Activated T-helper 2 cell treated with anti-CD3 and anti-CD28 coated beads, Interferon-gamma antibody, Interleukin-2, Interleukin-4, amounts not matched to agents 10 μg/mL and 5 μg/mL and 100 μg/mL, durations not matched to agents 14 hours and 24 hours and 36 hours (primary cell): ENCODE measurements at regions of chr14 and their contacts with region 1.

Region 1: DNA sequence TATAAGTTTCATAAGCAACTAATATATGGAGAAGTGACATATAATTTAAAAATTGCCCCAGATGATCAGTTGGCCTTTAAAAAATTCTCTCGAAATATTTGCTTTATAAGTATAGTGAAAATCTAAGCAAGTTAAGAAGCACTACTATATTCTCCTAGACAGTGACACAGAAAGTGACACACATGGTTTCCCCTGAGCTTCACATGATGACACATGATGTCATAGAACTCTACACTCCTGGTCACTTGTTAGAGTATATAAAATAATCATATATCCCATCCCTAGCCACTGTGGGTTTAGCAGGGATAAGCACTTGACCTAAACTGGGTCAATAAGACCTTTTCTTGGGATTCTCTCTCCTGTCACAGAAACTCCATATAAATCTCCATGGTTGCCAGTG is 42.6 kb upstream of the MTHFD1 start:
- DNase-seq: no peak
- H3K4me3 Mint-ChIP-seq: no peak overlapping the region
- H3K27ac Mint-ChIP-seq: no peak overlapping the region
- H3K4me1 Mint-ChIP-seq: peaks cover 8% of the 10 kb centered on the region
- H3K27me3 Mint-ChIP-seq: no peaks in the 10 kb centered on the region

Region 2: DNA sequence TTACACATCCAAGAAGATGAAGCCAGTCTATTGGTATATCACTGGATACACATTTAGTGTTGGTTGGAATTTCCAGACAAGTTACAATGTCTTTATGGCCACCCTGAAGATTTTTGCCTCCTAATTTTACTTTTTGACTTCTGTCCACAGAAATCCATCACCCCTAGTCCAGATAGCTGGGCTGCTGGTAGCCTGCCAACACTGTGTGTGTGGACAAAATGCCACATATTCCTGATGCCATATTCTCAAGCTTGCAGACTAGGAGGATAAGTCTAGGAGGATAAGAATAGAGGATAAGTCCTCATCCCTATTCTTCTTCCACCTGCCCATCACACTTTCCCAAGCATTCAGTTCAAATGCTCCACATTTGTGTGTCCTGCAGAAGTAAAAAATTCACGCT is 55.9 kb before region 1 on chr14:
- intact Hi-C with region 1: no loop called
- DNase-seq: no peak
- H3K4me3 Mint-ChIP-seq: no peak overlapping the region
- H3K27ac Mint-ChIP-seq: no peak overlapping the region
- H3K4me1 Mint-ChIP-seq: peaks cover 7% of the 10 kb centered on the region
- H3K27me3 Mint-ChIP-seq: peaks cover 28% of the 10 kb centered on the region

Region 3: DNA sequence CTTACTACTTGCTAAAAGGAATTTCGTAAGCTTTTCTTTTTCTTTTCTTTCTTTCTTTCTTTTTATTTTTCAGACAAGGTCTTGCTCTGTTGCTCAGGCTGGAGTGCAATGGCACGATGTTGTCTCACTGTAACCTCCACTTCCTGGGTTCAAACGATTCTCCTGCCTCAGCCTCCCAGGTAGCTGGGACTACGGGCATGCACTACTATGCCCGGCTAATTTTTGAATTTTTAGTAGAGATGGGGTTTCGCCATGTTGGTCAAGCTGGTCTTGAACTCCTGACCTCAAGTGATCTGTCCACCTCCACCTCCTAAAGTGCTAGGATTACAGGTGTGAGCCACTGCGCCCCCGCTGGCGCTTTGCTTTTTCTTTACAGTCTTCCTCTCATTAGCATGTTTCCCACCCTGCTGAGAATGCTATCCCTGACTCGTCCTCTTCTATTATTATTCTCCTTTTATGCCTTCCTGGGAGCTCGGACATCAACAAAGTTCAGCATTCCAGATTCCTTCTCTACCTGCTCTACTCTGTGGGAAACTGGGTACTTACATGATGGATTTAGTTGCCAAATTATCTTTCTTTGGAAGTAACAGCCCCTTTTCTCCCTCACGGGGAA is 45.7 kb after region 1 on chr14:
- intact Hi-C with region 1: no loop called
- DNase-seq: no peak
- H3K4me3 Mint-ChIP-seq: peak overlapping the region; percentile 44
- H3K27ac Mint-ChIP-seq: no peak overlapping the region
- H3K4me1 Mint-ChIP-seq: peaks cover 45% of the 10 kb centered on the region
- H3K27me3 Mint-ChIP-seq: no peaks in the 10 kb centered on the region

Region 4: DNA sequence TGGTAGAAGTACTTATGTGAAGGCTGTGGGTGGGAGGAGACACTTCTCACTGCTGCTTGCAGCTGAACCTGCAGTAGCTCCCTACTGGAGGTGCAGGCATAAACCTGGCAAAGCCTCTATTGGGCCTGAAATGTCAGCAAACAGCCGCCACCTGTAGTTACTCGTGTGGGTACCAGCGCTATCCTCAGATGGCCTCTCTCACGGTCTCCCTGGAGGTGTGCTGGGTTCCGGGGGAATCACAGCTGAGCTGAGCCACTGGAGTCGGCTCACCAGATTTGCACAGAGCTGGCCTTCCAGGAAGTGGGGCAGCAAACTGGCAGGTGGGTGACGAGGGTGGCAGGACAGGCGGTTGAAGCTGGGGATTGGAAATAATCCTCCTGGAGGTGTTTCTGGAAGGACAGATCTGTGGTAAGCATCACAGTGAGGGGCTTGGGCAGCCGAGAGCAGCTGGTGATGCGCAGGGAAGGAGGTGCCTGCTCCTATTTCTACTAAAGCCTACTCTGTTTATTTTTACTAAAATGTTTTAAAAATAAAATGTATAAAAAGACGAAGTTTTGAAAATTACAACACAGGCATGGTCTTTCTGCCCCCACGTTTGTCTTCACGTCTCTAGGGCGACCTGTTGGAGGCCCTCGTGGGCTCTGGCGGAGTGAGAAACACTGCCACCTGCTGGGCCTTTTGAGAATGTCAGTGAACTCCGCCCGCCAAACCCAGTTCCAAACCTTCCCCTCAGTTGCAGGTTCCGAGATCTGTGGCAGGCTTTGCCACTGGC is 290.9 kb after region 1 on chr14:
- intact Hi-C with region 1: loop called (anchors 2 kb)
- DNase-seq: peak; percentile 56
- H3K4me3 Mint-ChIP-seq: no peak overlapping the region
- H3K27ac Mint-ChIP-seq: no peak overlapping the region
- H3K4me1 Mint-ChIP-seq: peaks cover 3% of the 10 kb centered on the region
- H3K27me3 Mint-ChIP-seq: peaks cover 10% of the 10 kb centered on the region